ENCODE measurements at regions of chr6 and their contacts with region 1.

Region 1: GRCh38 chr6:111642463-111643158 is 36.9 kb upstream of the TRAF3IP2 start:
- DNase-seq: peak; percentile 58 to 79 (median 66)
- ATAC-seq: peak; percentile 98 to 99 (median 98)
- H3K4me3 ChIP-seq: peak overlapping the region in 1 of 3 donors; percentile 24
- H3K27ac ChIP-seq: no peak overlapping the region
- H3K4me1 ChIP-seq: no peaks in the 10 kb centered on the region
- H3K27me3 ChIP-seq: no peaks in the 10 kb centered on the region
- CTCF ChIP-seq: peak; percentile 53 to 74 (median 70)
- POLR2A ChIP-seq: no peak

Region 2: DNA sequence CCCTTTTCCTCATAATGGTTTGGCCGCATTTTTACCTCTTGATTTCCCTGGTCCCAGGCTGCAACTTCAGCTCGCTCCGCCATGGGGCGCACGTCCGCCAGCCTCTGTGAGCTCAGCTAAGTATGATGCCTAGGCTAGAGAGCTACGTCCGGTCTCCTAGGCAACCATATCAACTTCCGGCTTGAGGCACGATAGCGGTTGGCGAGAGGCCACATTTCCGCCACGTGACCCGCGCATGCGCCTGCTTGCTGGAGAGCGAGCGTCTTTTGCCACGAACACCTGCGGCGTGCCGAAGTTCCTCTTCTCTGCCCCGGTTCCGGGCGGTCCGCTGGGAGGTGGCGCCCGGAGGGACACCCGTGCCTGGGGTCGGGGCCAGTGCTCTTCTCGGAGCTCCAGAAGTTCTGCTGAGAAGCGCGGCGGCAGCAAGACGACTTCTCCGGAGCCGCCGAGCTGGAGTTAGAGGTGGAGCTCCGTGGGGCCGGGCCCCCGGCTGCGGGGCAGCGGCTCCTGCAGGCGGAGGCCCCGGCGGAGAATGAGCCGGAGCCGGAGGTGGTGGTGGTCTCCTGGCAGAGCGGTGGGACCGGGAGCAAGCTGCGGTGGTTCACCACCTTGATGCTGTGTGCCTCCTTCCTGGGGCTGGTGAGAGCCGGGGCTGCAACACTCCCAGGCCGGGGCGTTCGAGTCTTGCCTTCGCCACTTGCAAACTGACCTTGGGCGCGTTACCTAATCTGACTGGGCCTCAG is 383.4 kb before region 1 on chr6:
- intact Hi-C with region 1: loop called in 1 of 2 experiments (anchors 10 kb)
- DNase-seq: peak; percentile 98 to 99 (median 99)
- ATAC-seq: peak; percentile 99 to 100 (median 99)
- H3K4me3 ChIP-seq: peak overlapping the region; percentile 74 to 93 (median 90)
- H3K27ac ChIP-seq: peak overlapping the region; percentile 84 to 91 (median 87)
- H3K4me1 ChIP-seq: peaks cover 0 to 8% (median 0%) of the 10 kb centered on the region in 4 donors
- H3K27me3 ChIP-seq: no peaks in the 10 kb centered on the region
- CTCF ChIP-seq: peak; percentile 90 to 98 (median 94)
- POLR2A ChIP-seq: peak; percentile 65

Region 3: GRCh38 chr6:111361648-111362047 is 281.0 kb before region 1 on chr6:
- intact Hi-C with region 1: loop called in 1 of 2 experiments (anchors 10 kb)
- DNase-seq: peak in 1 of 3 donors; percentile 21
- ATAC-seq: peak; percentile 60 to 80 (median 67)
- H3K4me3 ChIP-seq: no peak overlapping the region
- H3K27ac ChIP-seq: no peak overlapping the region
- H3K4me1 ChIP-seq: peaks cover 0 to 5% (median 0%) of the 10 kb centered on the region in 4 donors
- H3K27me3 ChIP-seq: no peaks in the 10 kb centered on the region
- CTCF ChIP-seq: peak; percentile 29 to 41 (median 40)
- POLR2A ChIP-seq: no peak

Measured in right lobe of liver (tissue), 6 donors.